Transverse colon (tissue), 4 donors: ENCODE measurements at regions of chr12 and their contacts with region 1.

Region 1: DNA sequence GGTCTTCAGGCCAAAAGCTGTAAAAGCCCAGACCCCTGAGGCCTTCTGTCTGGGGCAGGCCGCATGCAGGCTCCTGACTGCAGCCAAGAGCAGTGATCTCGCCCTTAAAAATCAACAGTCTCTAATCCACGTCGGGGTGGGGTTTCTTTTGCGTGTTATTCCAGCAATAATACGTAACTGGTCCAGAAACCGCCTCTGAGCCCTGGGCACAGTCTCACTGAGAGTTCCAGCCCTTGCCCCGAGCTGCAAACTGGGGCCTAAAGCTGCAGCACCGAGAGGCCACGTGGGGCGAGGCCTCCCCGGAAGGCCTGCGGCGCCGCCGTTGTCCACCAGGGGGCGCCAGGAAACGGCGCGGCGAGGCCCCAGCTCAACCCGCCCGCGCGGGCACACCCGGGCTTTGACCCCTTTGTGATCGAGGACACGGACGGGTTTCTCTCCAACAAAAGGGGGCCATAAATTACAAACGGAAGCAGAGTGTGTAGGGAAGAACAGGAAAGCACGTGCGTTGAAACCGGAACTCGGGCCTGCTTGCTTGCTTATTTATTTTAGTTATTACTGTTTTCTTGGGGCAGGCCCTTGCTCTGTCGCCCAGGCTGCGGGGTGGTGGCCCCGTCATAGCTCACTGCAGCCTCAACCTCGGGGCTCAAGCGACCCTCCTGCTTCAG is 87.2 kb downstream of the NINJ2 start:
- DNase-seq: peak; percentile 84
- H3K4me3 ChIP-seq: peak overlapping the region in 1 of 4 donors; percentile 33
- H3K27ac ChIP-seq: peak overlapping the region; percentile 56 to 69 (median 61)
- H3K4me1 ChIP-seq: peaks cover 14 to 32% (median 22%) of the 10 kb centered on the region in 4 donors
- H3K27me3 ChIP-seq: no peaks in the 10 kb centered on the region
- CTCF ChIP-seq: peak; percentile 98 to 100 (median 100)
- EP300 ChIP-seq: no peak
- POLR2A ChIP-seq: no peak

Region 2: GRCh38 chr12:78981-79380 is 497.1 kb before region 1 on chr12:
- in situ Hi-C with region 1: no loop called
- intact Hi-C with region 1: no loop called
- DNase-seq: no peak
- H3K4me3 ChIP-seq: no peak overlapping the region
- H3K27ac ChIP-seq: no peak overlapping the region
- H3K4me1 ChIP-seq: no peaks in the 10 kb centered on the region
- H3K27me3 ChIP-seq: peaks cover 67% of the 10 kb centered on the region
- CTCF ChIP-seq: no peak
- EP300 ChIP-seq: no peak
- POLR2A ChIP-seq: no peak

Region 3: DNA sequence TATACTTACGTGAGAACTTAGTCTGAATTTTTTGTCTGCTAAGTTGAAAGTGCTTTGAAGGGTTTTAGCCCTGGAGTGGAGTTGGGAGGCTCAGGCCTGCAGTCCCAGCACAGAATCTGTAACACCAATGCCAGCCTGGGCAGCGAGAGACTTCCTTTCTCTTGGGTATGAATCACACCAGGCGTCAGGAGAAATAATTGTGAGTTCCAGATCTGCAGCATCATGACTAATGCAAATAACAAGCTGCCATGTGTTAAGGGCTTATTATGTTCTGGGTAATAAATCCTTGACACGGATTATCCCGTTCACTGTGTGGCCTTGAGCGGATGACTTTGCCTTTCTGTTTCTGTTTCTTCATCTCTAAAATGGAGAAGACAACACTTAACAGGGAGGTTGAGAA is 45.8 kb before region 1 on chr12:
- in situ Hi-C with region 1: no loop called
- intact Hi-C with region 1: no loop called
- DNase-seq: no peak
- H3K4me3 ChIP-seq: no peak overlapping the region
- H3K27ac ChIP-seq: peak overlapping the region in 2 of 4 donors; percentile 23 to 58
- H3K4me1 ChIP-seq: peaks cover 0 to 4% (median 0%) of the 10 kb centered on the region in 4 donors
- H3K27me3 ChIP-seq: no peaks in the 10 kb centered on the region
- CTCF ChIP-seq: no peak
- EP300 ChIP-seq: no peak
- POLR2A ChIP-seq: no peak

Region 4: DNA sequence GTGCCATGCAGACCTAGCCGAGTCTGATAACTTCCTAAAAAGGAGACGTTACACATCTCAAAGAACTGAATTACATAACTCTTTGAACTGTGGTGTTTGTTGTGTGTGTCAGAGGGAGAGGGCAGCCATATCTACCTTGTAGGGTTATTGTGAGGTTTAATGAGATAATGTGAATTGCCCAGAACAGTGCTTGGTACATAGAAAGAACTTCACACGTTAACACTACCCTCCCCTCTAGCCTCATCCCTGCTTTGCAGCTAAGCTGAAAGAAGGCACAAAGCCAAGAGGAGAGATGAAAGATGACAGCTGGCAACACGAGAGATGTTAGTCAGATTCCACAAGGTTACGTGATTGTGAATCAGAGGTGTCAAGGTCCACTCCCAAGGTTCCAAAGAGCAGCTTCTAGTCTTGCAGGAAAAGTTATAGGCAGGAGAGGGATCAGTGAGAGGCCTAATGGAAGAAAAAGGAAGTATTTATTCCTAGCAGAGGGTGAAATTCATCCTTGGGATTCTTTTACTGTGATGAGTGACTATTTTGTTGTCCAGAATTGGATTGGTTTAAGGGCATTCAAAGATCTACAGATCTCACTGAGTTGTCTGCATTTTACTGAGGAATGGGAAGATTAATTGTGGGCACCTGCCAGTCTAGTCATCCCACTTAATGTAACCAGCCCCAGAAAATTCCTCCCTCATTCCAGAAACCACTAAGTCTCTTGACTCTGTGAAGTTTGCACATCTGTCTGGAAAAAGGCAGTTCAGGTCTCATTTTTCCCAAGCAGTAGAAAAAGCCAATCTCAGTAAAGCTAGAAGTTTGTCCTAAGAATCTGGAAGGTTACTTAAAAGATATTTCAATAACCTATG is 150.4 kb after region 1 on chr12:
- in situ Hi-C with region 1: loop called in 1 of 4 experiments (anchors 25 kb)
- intact Hi-C with region 1: no loop called
- DNase-seq: no peak
- H3K4me3 ChIP-seq: no peak overlapping the region
- H3K27ac ChIP-seq: no peak overlapping the region
- H3K4me1 ChIP-seq: peaks cover 0 to 2% (median 0%) of the 10 kb centered on the region in 4 donors
- H3K27me3 ChIP-seq: no peaks in the 10 kb centered on the region
- CTCF ChIP-seq: no peak
- EP300 ChIP-seq: no peak
- POLR2A ChIP-seq: no peak

Region 5: DNA sequence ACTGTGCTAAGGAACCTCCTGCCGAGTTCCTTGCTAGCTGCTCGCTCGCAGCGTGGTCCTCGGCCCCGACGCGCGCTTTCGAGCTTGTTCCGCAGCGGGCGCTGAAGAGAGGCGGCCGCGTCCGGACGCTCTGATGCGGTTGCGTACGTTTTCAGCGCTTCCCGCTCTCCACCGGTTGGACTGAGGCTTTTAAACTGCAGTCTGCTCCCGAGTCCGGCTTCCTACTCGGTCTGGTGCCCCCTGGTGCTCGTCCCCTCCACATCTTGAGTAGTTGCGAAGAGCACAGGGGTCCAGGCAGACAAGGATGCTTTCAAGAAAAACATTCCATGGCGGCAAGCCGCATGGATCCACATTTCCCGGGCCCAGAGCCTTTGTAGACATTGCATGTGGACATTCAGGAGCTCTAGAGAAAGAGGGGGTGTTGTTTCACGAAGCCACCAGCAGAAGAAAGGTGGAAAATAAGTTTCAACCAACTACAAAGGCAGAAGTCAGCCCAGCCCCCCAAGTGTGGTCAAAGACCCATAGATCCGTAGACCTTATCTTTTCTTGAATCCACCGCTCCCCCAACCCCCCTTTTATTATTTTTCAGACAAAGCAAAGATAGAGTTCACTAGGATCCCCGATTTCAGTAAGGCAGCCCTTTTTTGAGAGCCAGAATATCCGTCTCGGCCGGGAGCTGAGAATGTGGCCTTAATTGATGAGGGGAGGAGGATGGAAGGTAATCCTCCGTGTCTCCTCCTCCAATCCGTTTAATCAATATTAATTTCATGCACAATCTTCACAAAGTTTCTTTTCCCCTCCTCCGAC is 175.3 kb after region 1 on chr12:
- in situ Hi-C with region 1: loop called in 2 of 4 experiments (anchors 5 to 25 kb)
- intact Hi-C with region 1: loop called (anchors 5 kb)
- DNase-seq: peak; percentile 93
- H3K4me3 ChIP-seq: peak overlapping the region; percentile 3 to 100 (median 98)
- H3K27ac ChIP-seq: peak overlapping the region; percentile 97 to 100 (median 100)
- H3K4me1 ChIP-seq: peaks cover 6 to 42% (median 24%) of the 10 kb centered on the region in 4 donors
- H3K27me3 ChIP-seq: no peaks in the 10 kb centered on the region
- CTCF ChIP-seq: peak; percentile 55 to 82 (median 63)
- EP300 ChIP-seq: no peak
- POLR2A ChIP-seq: peak; percentile 34

Region 6: GRCh38 chr12:810671-811415 is 234.8 kb after region 1 on chr12:
- in situ Hi-C with region 1: loop called (anchors 5 to 25 kb)
- intact Hi-C with region 1: no loop called
- DNase-seq: no peak
- H3K4me3 ChIP-seq: no peak overlapping the region
- H3K27ac ChIP-seq: no peak overlapping the region
- H3K4me1 ChIP-seq: peaks cover 0 to 52% (median 16%) of the 10 kb centered on the region in 4 donors
- H3K27me3 ChIP-seq: no peaks in the 10 kb centered on the region
- CTCF ChIP-seq: no peak
- EP300 ChIP-seq: no peak
- POLR2A ChIP-seq: no peak

Region 7: GRCh38 chr12:949453-950191 is 373.5 kb after region 1 on chr12 and contains the start of gene RAD52:
- in situ Hi-C with region 1: loop called in 2 of 4 experiments (anchors 10 to 25 kb)
- intact Hi-C with region 1: loop called (anchors 2 kb)
- DNase-seq: peak; percentile 98
- H3K4me3 ChIP-seq: peak within 1 kb of the TSS; percentile 35 to 74 (median 62)
- H3K27ac ChIP-seq: peak within 1 kb of the TSS; percentile 89 to 97 (median 94)
- H3K4me1 ChIP-seq: peaks cover 6 to 26% (median 10%) of the 10 kb centered on the region in 4 donors
- H3K27me3 ChIP-seq: no peaks in the 10 kb centered on the region
- CTCF ChIP-seq: peak; percentile 95 to 99 (median 98)
- EP300 ChIP-seq: no peak
- POLR2A ChIP-seq: peak; percentile 89
- total RNA-seq, gene RAD52: 12.7 to 84.2 (median 31.4) TPM